ENCODE measurements at regions of chr3 and their contacts with region 1.

Region 1: DNA sequence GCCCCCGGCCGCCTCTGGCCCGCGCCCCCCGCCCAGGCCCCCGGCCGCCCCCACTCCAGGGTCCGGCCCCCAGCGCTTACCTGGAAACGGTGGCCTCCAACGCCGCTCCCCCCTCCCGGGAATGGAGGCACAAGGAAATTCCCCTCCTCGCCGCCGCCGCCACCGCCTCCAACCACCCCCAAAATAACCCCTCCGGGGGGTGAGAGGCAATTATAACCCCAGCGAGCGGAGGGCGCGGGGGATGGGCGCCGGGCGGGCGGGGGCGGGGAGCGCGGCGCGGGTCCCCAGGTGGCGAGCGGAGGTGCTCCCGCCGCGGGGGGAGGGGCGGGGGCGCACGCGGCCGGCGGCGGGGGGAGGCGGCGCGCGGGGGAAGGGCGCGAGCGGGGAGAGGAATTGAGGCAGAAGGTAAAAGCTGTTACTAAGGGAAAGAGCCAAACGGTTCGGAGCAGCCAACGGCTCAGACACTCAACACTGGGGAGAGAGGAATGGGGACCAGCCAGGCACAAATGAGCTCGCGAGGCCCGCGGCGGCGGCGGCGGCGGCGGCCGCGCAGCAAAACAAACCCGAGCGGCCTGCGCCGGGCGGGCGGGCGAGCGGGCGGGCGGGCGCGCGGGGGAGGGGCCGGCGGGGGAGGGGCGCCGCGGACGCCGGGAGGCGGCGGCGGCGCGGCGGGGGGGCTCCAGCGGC is at the start of gene TBL1XR1:
- DNase-seq: peak; percentile 89 to 96 (median 93)
- H3K4me3 ChIP-seq: peak within 1 kb of the TSS; percentile 72 to 100 (median 94)
- H3K27ac ChIP-seq: peak within 1 kb of the TSS; percentile 93 to 100 (median 96)
- H3K4me1 ChIP-seq: peaks cover 15 to 30% of the 10 kb centered on the region in 2 donors
- H3K27me3 ChIP-seq: no peaks in the 10 kb centered on the region
- CTCF ChIP-seq: no peak
- POLR2A ChIP-seq: peak in 1 of 2 donors; percentile 55
- total RNA-seq, gene TBL1XR1: 74.0 to 258 (median 103) TPM

Region 2: DNA sequence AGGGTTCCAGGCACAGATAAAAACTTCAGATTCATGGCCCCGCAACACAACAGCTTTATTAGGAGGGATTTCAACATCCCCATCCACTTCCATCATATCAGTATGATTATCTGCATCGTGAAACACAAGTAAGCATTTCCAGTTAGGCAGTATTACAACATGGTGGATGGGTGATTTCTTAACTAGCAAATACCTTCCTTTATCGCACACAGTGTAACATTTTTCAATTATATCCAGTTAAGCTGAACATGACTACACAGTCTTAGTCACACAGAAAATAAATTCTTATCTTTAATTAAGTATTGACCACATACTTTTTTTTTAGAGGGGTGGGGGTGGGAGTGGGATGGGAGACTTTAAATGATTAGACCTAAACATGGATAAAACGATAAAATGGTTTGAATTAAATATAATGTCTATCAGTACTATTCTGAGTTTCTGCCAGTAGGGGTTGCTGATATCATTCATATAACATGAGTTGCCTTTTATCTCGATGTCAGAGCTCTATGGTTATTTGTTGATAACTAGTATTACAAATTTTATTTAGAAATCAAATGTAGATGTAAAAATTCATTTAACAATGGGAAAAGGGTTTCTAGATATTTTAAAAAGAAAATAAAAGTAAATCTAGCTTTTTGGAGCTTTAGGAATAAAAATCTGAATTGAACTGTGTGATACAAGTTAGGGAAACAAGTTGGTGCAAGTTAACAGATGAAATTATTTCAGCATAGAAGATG is 146.5 kb before region 1 on chr3:
- intact Hi-C with region 1: loop called (anchors 10 kb)
- DNase-seq: no peak
- H3K4me3 ChIP-seq: no peak overlapping the region
- H3K27ac ChIP-seq: peak overlapping the region in 1 of 5 donors; percentile 4
- H3K4me1 ChIP-seq: peaks cover 0 to 11% of the 10 kb centered on the region in 2 donors
- H3K27me3 ChIP-seq: no peaks in the 10 kb centered on the region
- CTCF ChIP-seq: peak; percentile 30 to 86 (median 64)
- POLR2A ChIP-seq: no peak

Region 3: GRCh38 chr3:177294221-177294620 is 97.0 kb after region 1 on chr3:
- intact Hi-C with region 1: no loop called
- DNase-seq: peak; percentile 29 to 79 (median 57)
- H3K4me3 ChIP-seq: no peak overlapping the region
- H3K27ac ChIP-seq: peak overlapping the region in 1 of 5 donors; percentile 9
- H3K4me1 ChIP-seq: peaks cover 0 to 3% of the 10 kb centered on the region in 2 donors
- H3K27me3 ChIP-seq: no peaks in the 10 kb centered on the region
- CTCF ChIP-seq: no peak
- POLR2A ChIP-seq: no peak

Region 4: DNA sequence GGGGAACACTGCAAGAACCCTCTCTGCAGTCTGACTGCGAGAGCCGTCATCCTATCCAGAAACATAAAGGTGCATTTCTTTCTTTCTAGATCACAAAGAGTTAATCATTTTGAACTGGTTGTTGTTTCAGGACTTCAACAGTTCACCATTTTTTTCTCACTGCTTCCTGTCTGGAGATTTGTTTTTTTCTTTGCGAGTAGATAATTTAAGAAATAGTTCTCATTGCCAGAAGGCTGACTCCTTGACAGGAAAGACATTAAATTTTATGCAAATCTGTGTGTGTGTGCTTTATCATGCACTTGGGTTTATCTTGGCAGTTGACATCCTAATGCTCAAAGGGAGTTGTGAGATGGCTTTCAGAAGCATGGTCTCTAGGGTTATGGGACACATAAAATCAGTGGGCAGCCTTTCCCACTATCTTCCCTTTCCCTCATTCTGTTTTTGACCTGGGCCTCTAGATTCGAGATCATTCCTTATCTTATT is 123.6 kb after region 1 on chr3:
- intact Hi-C with region 1: loop called in 1 of 2 experiments (anchors 10 kb)
- DNase-seq: no peak
- H3K4me3 ChIP-seq: no peak overlapping the region
- H3K27ac ChIP-seq: peak overlapping the region in 1 of 5 donors; percentile 14
- H3K4me1 ChIP-seq: peaks cover 0 to 13% of the 10 kb centered on the region in 2 donors
- H3K27me3 ChIP-seq: no peaks in the 10 kb centered on the region
- CTCF ChIP-seq: no peak
- POLR2A ChIP-seq: no peak

Region 5: GRCh38 chr3:177359593-177360357 is 162.6 kb after region 1 on chr3:
- intact Hi-C with region 1: loop called (anchors 5 kb)
- DNase-seq: peak; percentile 95 to 98 (median 96)
- H3K4me3 ChIP-seq: peak overlapping the region in 2 of 4 donors; percentile 41 to 50
- H3K27ac ChIP-seq: peak overlapping the region; percentile 87 to 96 (median 94)
- H3K4me1 ChIP-seq: peaks cover 37 to 42% of the 10 kb centered on the region in 2 donors
- H3K27me3 ChIP-seq: no peaks in the 10 kb centered on the region
- CTCF ChIP-seq: peak in 1 of 6 experiments; percentile 20
- POLR2A ChIP-seq: peak; percentile 13 to 80

Measured in adrenal gland (tissue), 19 donors.